Endothelial cell of umbilical vein (primary cell): ENCODE measurements at regions of chr13 and their contacts with region 1.

Region 1: DNA sequence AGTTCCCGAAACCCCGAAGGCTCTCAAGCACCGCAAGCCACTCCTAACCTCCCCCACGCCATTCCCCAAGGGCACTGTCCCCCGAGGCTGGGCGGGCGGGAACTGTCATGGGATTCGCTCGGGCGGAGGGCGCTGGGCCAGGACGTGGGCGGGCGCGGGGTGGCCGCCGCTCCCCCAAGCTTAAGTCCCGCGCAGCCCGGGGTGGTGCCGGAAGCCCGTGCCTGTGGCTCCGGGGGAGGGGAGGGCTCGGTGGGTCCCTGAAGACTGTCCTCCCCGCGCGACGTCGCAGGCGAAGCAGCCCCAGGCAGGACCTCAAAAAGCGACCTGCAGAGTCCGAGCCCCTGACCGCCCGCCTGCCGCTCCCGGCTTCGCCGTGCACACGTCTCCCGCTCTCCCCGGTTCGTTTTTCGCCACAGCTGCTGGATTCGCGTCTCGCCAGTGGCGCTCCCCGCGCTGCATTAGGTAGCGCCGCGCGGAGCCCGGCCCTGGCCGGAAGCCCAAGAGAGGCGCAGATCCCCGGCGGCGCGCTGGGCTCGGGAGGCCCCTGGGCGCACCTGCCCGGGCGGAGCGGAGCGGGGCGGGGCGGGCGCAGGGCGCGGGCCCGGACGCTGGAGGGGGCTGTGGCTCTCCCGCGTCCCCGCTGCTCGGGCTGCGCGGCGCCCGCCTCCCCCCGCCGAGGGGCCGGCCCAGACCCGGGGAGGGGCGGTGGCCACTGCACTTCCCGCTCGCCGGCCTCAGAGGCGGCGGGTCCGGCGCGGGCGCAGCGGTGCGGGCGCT is at the start of gene FARP1:
- DNase-seq: peak; percentile 55
- H3K4me3 ChIP-seq: peak within 1 kb of the TSS; percentile 76 to 88 (median 81)
- H3K27ac ChIP-seq: peak within 1 kb of the TSS; percentile 30
- H3K4me1 ChIP-seq: peaks cover 12% of the 10 kb centered on the region
- H3K27me3 ChIP-seq: peaks cover 7 to 9% of the 10 kb centered on the region in 2 experiments
- CTCF ChIP-seq: peak; percentile 19 to 32
- POLR2A ChIP-seq: no peak
- total RNA-seq, gene FARP1: 73.5 and 77.7 TPM in 2 replicates

Region 2: DNA sequence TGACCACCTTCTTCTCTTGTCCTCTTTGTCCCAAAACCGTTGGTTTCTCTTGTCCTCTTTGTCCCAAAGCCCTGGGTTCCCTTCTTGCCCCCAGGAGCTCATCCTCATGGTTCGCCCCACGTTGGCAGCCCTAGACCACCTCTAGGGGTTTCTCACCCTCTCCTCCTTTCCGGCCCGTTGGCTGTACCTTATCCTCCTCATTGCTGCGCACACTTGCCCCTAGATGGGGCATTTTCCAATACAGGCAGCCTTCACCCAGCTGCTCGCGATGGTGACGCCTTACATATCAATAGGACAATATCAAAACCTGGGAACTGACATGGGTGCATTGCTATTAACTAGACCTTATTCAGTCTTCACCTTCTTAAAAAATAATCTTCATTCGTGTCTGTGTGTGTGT is 102.6 kb before region 1 on chr13:
- CTCF ChIA-PET with region 1: no interaction called
- POLR2A ChIA-PET with region 1: no interaction called
- dilution Hi-C with region 1: no loop called
- intact Hi-C with region 1: loop called (anchors 5 kb)
- DNase-seq: no peak
- H3K4me3 ChIP-seq: no peak overlapping the region
- H3K27ac ChIP-seq: no peak overlapping the region
- H3K4me1 ChIP-seq: no peaks in the 10 kb centered on the region
- H3K27me3 ChIP-seq: no peaks in the 10 kb centered on the region
- CTCF ChIP-seq: no peak
- POLR2A ChIP-seq: no peak

Region 3: GRCh38 chr13:98173431-98174152 is 31.0 kb after region 1 on chr13:
- CTCF ChIA-PET with region 1: no interaction called
- POLR2A ChIA-PET with region 1: no interaction called
- dilution Hi-C with region 1: no loop called
- intact Hi-C with region 1: loop called (anchors 2 kb)
- DNase-seq: peak; percentile 61
- H3K4me3 ChIP-seq: no peak overlapping the region
- H3K27ac ChIP-seq: peak overlapping the region; percentile 4
- H3K4me1 ChIP-seq: peaks cover 32% of the 10 kb centered on the region
- H3K27me3 ChIP-seq: no peaks in the 10 kb centered on the region
- CTCF ChIP-seq: no peak
- POLR2A ChIP-seq: no peak

Region 4: GRCh38 chr13:98252931-98253470 is 110.4 kb after region 1 on chr13:
- CTCF ChIA-PET with region 1: no interaction called
- POLR2A ChIA-PET with region 1: no interaction called
- dilution Hi-C with region 1: no loop called
- intact Hi-C with region 1: loop called (anchors 1 kb)
- DNase-seq: peak; percentile 84
- H3K4me3 ChIP-seq: peak overlapping the region in 1 of 3 experiments; percentile 10
- H3K27ac ChIP-seq: peak overlapping the region; percentile 54
- H3K4me1 ChIP-seq: peaks cover 25% of the 10 kb centered on the region
- H3K27me3 ChIP-seq: no peaks in the 10 kb centered on the region
- CTCF ChIP-seq: no peak
- POLR2A ChIP-seq: no peak

Region 5: DNA sequence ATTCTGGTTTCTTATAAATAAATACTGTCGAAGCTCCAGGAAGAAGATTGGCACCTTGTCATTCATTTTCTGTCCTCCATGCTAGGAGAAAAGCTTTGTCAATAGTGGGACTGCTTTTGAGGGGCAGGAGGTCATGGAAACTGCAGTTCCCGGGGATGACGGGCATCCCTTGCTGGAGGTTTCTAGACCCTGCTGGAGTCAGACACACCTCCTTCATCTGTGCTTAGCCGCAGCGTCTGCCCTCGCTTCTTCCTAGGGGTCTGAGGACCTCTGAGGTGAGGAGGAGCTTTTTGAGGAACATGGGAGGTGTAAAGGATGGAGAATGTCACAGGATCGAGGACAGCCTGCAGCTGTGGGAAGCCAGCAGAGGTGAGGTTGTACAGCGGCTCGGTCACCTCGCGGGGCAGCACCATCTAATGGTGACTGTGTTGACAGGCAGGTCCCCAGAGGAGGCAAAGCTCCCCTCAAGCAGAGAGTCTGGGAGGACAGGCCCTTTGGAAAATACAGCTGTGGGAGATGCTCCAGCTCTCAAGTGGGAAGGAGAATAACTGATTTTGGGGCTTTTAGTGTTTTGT is 207.2 kb after region 1 on chr13:
- CTCF ChIA-PET with region 1: interaction called, 3 read pairs
- POLR2A ChIA-PET with region 1: no interaction called
- dilution Hi-C with region 1: no loop called
- intact Hi-C with region 1: loop called (anchors 5 kb)
- DNase-seq: peak; percentile 10
- H3K4me3 ChIP-seq: no peak overlapping the region
- H3K27ac ChIP-seq: no peak overlapping the region
- H3K4me1 ChIP-seq: no peaks in the 10 kb centered on the region
- H3K27me3 ChIP-seq: no peaks in the 10 kb centered on the region
- CTCF ChIP-seq: no peak
- POLR2A ChIP-seq: no peak

Region 6: GRCh38 chr13:98411681-98412201 is 269.2 kb after region 1 on chr13:
- CTCF ChIA-PET with region 1: no interaction called
- POLR2A ChIA-PET with region 1: no interaction called
- dilution Hi-C with region 1: no loop called
- intact Hi-C with region 1: loop called (anchors 5 kb)
- DNase-seq: peak; percentile 60
- H3K4me3 ChIP-seq: no peak overlapping the region
- H3K27ac ChIP-seq: no peak overlapping the region
- H3K4me1 ChIP-seq: no peaks in the 10 kb centered on the region
- H3K27me3 ChIP-seq: no peaks in the 10 kb centered on the region
- CTCF ChIP-seq: no peak
- POLR2A ChIP-seq: no peak

Region 7: DNA sequence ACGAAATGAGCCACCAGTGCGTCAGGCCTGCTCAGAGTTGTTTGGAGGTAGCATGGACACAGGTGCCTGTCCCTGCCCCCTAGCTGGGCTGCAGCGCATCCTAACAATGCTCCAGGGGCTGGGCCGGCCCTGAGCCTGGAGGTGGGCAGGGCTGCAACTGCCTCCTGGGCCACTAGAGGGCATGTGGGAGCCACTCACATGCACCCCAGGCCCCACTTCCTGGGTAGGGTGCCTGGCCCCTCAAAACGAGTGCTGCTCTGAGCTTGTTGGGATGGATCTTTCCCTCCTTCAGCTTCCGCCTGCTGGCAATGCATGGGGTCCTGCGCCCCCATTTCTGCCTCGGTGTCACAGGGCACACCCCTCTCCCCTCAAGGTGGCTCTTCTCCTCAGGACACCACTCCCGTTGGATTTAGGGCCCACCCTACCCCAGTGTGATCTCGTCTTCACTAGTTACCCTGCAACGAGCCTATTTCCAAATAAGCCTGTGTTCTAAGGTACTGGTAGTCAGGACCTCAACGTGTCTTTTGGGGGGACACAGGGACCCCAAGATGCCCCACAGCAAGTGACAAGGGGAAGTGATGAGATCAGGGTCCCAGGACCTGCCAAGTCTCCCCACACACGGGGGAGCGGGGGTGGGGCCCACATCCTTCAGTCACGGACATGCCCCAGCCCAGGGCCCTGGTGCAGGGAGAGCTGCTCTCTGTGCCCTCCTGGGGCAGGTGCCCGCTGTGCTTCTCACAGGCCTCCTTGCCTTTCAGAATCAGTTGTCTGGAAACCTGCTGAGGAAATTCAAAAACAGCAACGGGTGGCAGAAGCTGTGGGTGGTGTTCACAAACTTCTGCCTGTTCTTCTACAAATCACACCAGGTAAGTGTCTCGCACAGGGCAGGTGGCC is 303.0 kb after region 1 on chr13:
- CTCF ChIA-PET with region 1: no interaction called
- POLR2A ChIA-PET with region 1: no interaction called
- dilution Hi-C with region 1: no loop called
- intact Hi-C with region 1: loop called (anchors 1 kb)
- DNase-seq: peak; percentile 64
- H3K4me3 ChIP-seq: no peak overlapping the region
- H3K27ac ChIP-seq: no peak overlapping the region
- H3K4me1 ChIP-seq: no peaks in the 10 kb centered on the region
- H3K27me3 ChIP-seq: no peaks in the 10 kb centered on the region
- CTCF ChIP-seq: peak; percentile 93 to 99
- POLR2A ChIP-seq: no peak